PC-3 (cell line): ENCODE measurements at regions of chr1 and their contacts with region 1.

Region 1: DNA sequence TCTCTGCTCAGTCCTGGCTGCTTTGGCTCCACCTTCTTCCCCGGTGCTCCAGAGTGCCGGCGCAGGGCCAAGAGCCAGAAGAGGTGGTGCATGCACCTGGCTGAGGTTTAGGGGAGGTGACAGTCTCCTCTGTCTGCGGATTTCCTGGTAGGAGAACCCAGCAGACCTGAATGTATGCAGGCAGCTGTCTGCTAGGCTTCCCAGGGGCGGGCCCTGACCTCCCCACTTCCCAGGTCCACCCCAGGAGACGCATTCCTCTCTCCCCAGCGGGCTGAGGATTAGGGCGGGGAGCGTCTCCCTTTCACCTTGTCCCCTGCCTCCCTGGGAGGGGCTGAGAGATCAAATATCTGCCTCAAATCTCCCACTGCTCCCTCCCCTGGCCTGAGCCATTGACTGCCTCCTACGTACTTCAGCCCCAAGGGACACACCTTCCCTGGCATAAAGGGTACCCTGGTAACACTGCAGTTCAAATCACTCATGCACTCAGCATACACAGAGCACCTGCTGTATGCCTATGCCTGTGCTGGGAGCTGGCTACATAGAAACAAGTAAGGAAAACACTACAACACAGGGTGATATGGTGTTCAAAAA is 27.5 kb downstream of the DMBX1 start:
- DNase-seq: peak; percentile 91
- ATAC-seq: peak; percentile 70
- H3K4me3 ChIP-seq: peak overlapping the region; percentile 41
- H3K27ac ChIP-seq: peak overlapping the region; percentile 1; the same call in 1 of the 2 replicates
- H3K4me1 ChIP-seq: peaks cover 51% of the 10 kb centered on the region
- H3K27me3 ChIP-seq: no peaks in the 10 kb centered on the region
- CTCF ChIP-seq: no peak

Region 2: DNA sequence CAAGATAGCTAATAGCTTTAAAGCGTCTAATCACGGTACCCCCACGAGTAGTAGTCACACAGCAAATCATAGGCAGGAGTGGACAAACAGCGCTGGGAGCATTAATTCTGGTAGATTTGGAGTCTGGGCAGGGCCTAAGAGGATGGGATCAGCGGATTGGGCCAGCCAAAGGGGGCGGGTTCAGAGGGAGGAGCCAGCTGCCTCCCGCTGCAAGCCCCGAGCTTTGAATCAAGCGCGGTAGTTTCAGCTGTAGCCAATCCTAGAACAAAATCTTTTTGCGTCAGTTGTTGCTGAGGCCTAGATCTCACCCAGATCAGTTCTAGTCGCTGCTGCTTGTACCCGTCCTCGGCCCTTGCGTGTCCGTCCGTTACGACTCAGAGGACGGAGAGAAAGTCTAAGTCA is 933.8 kb before region 1 on chr1:
- CTCF ChIA-PET with region 1: no interaction called
- POLR2A ChIA-PET with region 1: no interaction called
- intact Hi-C with region 1: no loop called
- DNase-seq: peak; percentile 97
- ATAC-seq: peak; percentile 80
- H3K4me3 ChIP-seq: peak overlapping the region; percentile 91
- H3K27ac ChIP-seq: no peak overlapping the region
- H3K4me1 ChIP-seq: peaks cover 7% of the 10 kb centered on the region
- H3K27me3 ChIP-seq: no peaks in the 10 kb centered on the region
- CTCF ChIP-seq: no peak

Region 3: DNA sequence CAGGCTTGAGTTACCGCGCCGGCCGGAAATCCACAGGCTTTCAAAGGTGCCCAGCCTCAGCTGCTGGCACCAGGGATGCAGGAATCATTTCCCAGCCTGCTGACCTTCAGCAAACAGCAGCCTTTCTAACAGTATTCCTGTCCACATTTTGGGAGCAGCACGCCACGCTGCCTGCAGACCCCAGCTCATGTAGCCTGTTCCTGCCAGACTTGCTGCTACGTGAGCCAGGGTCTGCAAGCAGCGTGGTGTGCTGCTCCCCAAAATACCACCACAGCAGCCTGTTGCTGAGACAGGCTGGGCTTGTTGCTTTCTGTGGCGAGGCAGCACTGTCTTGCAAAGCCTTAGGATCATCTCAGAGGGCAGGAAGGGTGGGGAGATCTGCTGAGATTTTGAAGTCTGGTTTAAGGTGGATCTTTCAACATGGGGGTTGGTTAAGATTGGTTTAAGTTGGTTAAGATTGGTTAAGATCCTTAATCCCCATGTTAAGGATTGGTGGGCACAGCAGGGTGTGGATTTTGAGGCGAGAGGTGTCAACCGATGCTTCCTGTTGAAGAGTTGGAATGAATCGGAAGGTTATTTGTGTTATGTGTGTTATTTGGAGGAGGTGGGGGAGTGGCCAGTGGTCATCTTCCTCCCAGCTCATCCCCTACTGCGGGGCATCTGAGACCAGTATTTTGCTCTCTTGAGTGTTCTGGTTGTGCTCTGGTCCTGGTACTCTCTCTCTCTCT is 110.1 kb before region 1 on chr1:
- CTCF ChIA-PET with region 1: no interaction called
- POLR2A ChIA-PET with region 1: no interaction called
- intact Hi-C with region 1: loop called (anchors 2 kb)
- DNase-seq: no peak
- ATAC-seq: no peak
- H3K4me3 ChIP-seq: no peak overlapping the region
- H3K27ac ChIP-seq: no peak overlapping the region
- H3K4me1 ChIP-seq: peaks cover 2% of the 10 kb centered on the region; the same call in 1 of the 2 replicates
- H3K27me3 ChIP-seq: no peaks in the 10 kb centered on the region
- CTCF ChIP-seq: no peak

Region 4: GRCh38 chr1:46487818-46488218 is 29.3 kb before region 1 on chr1:
- CTCF ChIA-PET with region 1: interaction called, 10 read pairs
- POLR2A ChIA-PET with region 1: no interaction called
- intact Hi-C with region 1: no loop called
- DNase-seq: no peak
- ATAC-seq: no peak
- H3K4me3 ChIP-seq: no peak overlapping the region
- H3K27ac ChIP-seq: no peak overlapping the region
- H3K4me1 ChIP-seq: peaks cover 4% of the 10 kb centered on the region; the same call in 1 of the 2 replicates
- H3K27me3 ChIP-seq: peaks cover 19% of the 10 kb centered on the region
- CTCF ChIP-seq: peak; percentile 44

Region 5: GRCh38 chr1:46948629-46949274 is 431.6 kb after region 1 on chr1:
- CTCF ChIA-PET with region 1: no interaction called
- POLR2A ChIA-PET with region 1: no interaction called
- intact Hi-C with region 1: no loop called
- DNase-seq: peak; percentile 67
- ATAC-seq: peak; percentile 62
- H3K4me3 ChIP-seq: no peak overlapping the region
- H3K27ac ChIP-seq: no peak overlapping the region
- H3K4me1 ChIP-seq: no peaks in the 10 kb centered on the region
- H3K27me3 ChIP-seq: peaks cover 3% of the 10 kb centered on the region; the same call in 1 of the 2 replicates
- CTCF ChIP-seq: no peak